Colonic mucosa (tissue), 4 donors: ENCODE measurements at regions of chr22 and their contacts with region 1.

Region 1: DNA sequence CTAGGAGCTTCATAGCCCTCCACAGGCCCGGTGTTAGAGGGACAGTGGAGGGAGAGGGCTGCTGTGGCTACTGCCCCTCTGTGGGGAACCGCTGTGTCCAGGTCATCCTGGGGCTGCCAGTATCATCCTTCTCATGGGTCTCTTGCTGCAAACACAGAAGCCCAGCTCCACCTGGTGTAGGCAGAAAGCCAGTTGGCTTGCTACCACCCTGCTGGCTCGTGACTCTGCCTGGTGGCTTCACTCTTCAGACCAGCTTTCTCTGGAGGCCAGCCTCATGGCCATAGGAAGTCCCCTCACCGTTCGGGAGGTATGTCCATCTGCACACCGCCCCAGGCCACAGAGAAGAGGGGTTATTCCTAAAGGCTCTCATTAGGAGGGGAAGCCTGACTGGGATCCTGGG is 19.4 kb upstream of the SUSD2 start:
- DNase-seq: no peak
- H3K4me3 ChIP-seq: no peak overlapping the region
- H3K27ac ChIP-seq: no peak overlapping the region
- H3K4me1 ChIP-seq: peaks cover 4% of the 10 kb centered on the region
- H3K27me3 ChIP-seq: no peaks in the 10 kb centered on the region
- CTCF ChIP-seq: no peak

Region 2: DNA sequence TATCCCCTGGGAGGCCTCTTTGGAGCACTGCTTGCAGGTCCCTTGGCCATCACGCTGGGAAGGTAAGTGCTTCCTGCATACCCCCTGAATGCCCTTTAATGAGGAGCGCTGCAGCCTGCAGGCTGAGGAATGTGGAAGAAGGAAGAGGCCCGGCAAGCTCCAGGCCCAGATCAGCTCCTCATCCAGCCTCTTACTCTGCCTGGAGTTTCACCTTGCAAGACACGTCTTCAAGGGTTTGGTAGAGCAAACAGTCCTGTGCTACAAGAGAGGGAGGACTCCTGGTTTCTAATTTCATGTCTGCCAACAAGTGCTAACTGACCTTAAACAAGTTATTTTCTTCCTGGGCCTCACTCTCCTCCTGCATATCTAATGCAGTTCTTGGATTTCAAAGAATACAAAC is 293.3 kb before region 1 on chr22:
- intact Hi-C with region 1: no loop called
- DNase-seq: no peak
- H3K4me3 ChIP-seq: no peak overlapping the region
- H3K27ac ChIP-seq: no peak overlapping the region
- H3K4me1 ChIP-seq: no peaks in the 10 kb centered on the region
- H3K27me3 ChIP-seq: no peaks in the 10 kb centered on the region
- CTCF ChIP-seq: no peak

Region 3: GRCh38 chr22:24005201-24005600 is 156.7 kb before region 1 on chr22 and contains the start of gene GSTT4:
- intact Hi-C with region 1: loop called (anchors 10 kb)
- DNase-seq: no peak
- H3K4me3 ChIP-seq: no peak within 1 kb of the TSS
- H3K27ac ChIP-seq: no peak within 1 kb of the TSS
- H3K4me1 ChIP-seq: no peaks in the 10 kb centered on the region
- H3K27me3 ChIP-seq: no peaks in the 10 kb centered on the region
- CTCF ChIP-seq: no peak
- total RNA-seq, gene GSTT4: not detected